ENCODE measurements at regions of chr9 and their contacts with region 1.

Region 1: GRCh38 chr9:135907431-135908092 is at the start of gene CAMSAP1:
- DNase-seq: peak; percentile 90
- H3K4me3 ChIP-seq: peak within 1 kb of the TSS; percentile 66 to 78 (median 69)
- H3K27ac ChIP-seq: peak within 1 kb of the TSS; percentile 94
- H3K4me1 ChIP-seq: peaks cover 52% of the 10 kb centered on the region
- H3K27me3 ChIP-seq: no peaks in the 10 kb centered on the region
- CTCF ChIP-seq: no peak
- total RNA-seq, gene CAMSAP1: 23.5 to 25.5 TPM

Region 2: GRCh38 chr9:135887585-135888050 is 19.9 kb before region 1 on chr9:
- CTCF ChIA-PET with region 1: interaction called, 3 read pairs
- dilution Hi-C with region 1: no loop called
- in situ Hi-C with region 1: no loop called
- intact Hi-C with region 1: loop called (anchors 1 kb)
- DNase-seq: no peak
- H3K4me3 ChIP-seq: no peak overlapping the region
- H3K27ac ChIP-seq: no peak overlapping the region
- H3K4me1 ChIP-seq: peaks cover 74% of the 10 kb centered on the region
- H3K27me3 ChIP-seq: no peaks in the 10 kb centered on the region
- CTCF ChIP-seq: no peak

Region 3: DNA sequence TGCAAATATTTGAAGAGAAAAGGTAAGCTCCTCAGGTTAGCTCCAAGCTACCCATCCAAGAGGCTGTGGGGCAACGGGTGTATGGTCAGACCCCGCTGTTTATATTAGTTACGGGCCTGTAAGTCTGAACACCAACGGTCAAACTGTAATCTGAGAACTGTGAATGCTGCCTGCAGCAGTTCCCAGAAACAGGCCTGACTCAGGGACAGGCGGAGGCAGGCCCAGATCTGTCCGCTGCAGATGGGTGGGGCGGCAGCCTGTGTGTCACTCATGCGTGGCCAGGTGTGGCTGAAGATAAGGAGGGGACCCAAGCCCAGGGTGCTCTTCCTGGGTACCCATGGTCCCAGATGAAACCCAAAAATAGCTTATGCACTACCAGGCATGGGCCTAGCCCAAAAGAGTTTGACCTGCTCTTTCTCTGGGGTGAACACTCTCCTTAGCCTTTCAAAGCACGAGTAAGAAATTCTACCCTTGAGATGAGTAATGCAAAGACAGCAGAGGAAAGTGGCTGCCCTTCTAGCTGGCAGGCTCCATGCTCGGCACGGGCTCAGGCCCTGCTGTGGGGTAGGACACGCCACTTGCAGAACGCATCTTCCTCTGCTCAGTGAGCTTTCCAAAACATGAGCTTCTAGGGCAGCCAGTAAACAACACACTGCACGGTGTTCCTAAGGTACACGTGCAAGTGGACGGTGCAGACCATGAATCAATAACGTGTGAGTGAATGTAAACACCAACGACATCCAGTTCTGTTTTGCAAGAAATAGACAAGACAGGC is 44.5 kb after region 1 on chr9:
- CTCF ChIA-PET with region 1: no interaction called
- dilution Hi-C with region 1: loop called (anchors 5 kb)
- in situ Hi-C with region 1: no loop called
- intact Hi-C with region 1: loop called (anchors 5 kb)
- DNase-seq: peak; percentile 96
- H3K4me3 ChIP-seq: no peak overlapping the region
- H3K27ac ChIP-seq: peak overlapping the region; percentile 83
- H3K4me1 ChIP-seq: peaks cover 30% of the 10 kb centered on the region
- H3K27me3 ChIP-seq: no peaks in the 10 kb centered on the region
- CTCF ChIP-seq: no peak

Region 4: DNA sequence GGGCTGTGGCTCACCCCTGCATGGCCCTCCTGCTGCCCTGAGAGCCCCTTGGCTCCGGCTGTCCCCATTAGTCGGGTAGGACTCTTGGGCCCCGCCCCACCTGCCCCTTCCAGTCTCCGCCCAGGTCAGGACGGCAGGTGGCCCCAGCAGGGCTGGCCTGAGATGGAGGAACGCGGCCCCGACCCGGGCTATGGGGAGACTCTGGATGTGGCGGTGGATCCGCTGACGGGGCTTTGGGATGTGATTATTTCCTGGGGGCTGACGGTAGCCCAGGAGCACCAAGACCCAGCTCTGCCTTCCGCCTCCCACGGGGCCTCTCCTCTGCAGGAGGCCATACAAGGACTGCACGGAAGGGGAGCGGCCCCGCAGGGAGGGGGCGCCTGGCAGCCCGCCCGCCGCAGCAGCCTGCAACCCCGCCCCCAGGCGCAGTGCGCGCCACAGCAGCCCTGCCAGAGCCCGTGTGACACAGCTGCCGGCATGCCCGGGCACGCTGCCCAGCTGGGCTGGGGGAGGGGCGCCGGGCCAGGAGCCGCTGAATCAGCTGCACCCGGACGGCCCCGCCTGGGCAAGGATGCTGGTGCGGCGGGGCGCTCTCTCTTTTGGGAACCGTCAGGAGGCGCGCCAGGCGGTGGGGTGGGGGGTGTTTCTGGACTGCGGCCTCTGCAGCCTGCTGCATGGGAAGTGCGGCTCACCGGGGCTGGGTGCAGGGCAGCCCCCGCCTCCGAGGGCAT is 202.0 kb after region 1 on chr9:
- CTCF ChIA-PET with region 1: no interaction called
- dilution Hi-C with region 1: no loop called
- in situ Hi-C with region 1: no loop called
- intact Hi-C with region 1: loop called (anchors 5 kb)
- DNase-seq: peak; percentile 90
- H3K4me3 ChIP-seq: peak overlapping the region in 2 of 3 experiments; percentile 6 to 12
- H3K27ac ChIP-seq: no peak overlapping the region
- H3K4me1 ChIP-seq: peaks cover 46% of the 10 kb centered on the region
- H3K27me3 ChIP-seq: no peaks in the 10 kb centered on the region
- CTCF ChIP-seq: peak in 1 of 2 donors; percentile 20

Measured in mammary epithelial cell (primary cell).